Panc1 (cell line): ENCODE measurements at regions of chr11 and their contacts with region 1.

Region 1: GRCh38 chr11:31214372-31214771 is 155.2 kb downstream of the DCDC1 start:
- DNase-seq: no peak
- ATAC-seq: no peak
- H3K4me3 ChIP-seq: no peak overlapping the region
- H3K27ac ChIP-seq: no peak overlapping the region
- H3K4me1 ChIP-seq: no peaks in the 10 kb centered on the region
- H3K27me3 ChIP-seq: peaks cover 2% of the 10 kb centered on the region
- CTCF ChIP-seq: no peak

Region 2: DNA sequence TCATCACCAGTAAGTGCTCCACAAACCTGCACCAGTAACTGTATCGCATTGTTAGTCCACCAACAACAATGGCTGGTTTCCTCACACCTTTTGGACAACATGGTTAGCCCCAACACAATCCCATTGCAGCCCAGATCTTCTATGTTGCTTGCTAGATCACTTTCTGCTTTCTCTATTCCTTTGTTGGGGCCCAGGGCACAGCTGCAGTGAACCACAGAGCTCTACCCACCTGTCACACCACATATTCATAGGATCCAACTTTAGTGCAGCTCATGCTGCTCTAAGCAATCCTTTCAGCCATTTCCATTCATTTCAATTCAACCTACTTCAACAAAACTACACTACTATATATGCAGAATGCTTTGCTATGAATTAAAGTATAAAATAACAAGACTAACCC is 209.2 kb before region 1 on chr11:
- CTCF ChIA-PET with region 1: no interaction called
- POLR2A ChIA-PET with region 1: no interaction called
- in situ Hi-C with region 1: no loop called
- intact Hi-C with region 1: no loop called
- DNase-seq: no peak
- ATAC-seq: no peak
- H3K4me3 ChIP-seq: no peak overlapping the region
- H3K27ac ChIP-seq: no peak overlapping the region
- H3K4me1 ChIP-seq: no peaks in the 10 kb centered on the region
- H3K27me3 ChIP-seq: no peaks in the 10 kb centered on the region
- CTCF ChIP-seq: no peak

Region 3: GRCh38 chr11:31240338-31240904 is 26.0 kb after region 1 on chr11:
- CTCF ChIA-PET with region 1: no interaction called
- POLR2A ChIA-PET with region 1: interaction called, 15 read pairs
- in situ Hi-C with region 1: no loop called
- intact Hi-C with region 1: no loop called
- DNase-seq: peak; percentile 18
- ATAC-seq: no peak
- H3K4me3 ChIP-seq: no peak overlapping the region
- H3K27ac ChIP-seq: no peak overlapping the region
- H3K4me1 ChIP-seq: no peaks in the 10 kb centered on the region
- H3K27me3 ChIP-seq: no peaks in the 10 kb centered on the region
- CTCF ChIP-seq: peak; percentile 71; the same call in 1 of the 2 replicates

Region 4: DNA sequence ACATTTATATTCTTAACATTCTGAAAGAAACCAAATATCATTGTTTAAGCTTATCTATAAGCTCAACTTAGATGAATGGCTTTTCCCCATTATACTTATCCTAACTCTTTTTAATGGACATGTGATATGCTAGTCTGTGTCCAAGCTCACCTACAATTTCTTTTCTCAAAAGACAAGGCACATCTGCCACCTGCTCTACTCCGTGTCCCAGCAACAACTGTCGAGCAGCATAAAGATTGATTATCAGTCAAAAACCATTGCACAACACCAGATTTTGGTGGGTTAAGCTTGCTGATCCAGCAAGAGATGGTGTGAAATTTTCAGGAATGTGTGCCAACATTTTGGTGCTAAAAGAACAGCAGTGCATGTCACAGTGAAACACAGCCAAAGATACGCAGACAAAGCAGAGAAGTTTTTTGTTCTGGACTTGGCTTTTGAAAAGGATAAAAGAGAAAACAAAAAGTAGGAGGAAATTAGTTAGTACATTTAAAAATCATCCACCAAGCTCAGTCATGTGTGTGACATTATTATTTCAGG is 89.3 kb after region 1 on chr11:
- CTCF ChIA-PET with region 1: interaction called, 15 read pairs
- POLR2A ChIA-PET with region 1: no interaction called
- in situ Hi-C with region 1: no loop called
- intact Hi-C with region 1: no loop called
- DNase-seq: no peak
- ATAC-seq: no peak
- H3K4me3 ChIP-seq: no peak overlapping the region
- H3K27ac ChIP-seq: no peak overlapping the region
- H3K4me1 ChIP-seq: no peaks in the 10 kb centered on the region
- H3K27me3 ChIP-seq: peaks cover 3% of the 10 kb centered on the region; the same call in 1 of the 2 replicates
- CTCF ChIP-seq: no peak